Posterior vena cava (tissue), 2 donors: ENCODE measurements at regions of chr2 and their contacts with region 1.

Region 1: GRCh38 chr2:172350839-172351479 is 76.4 kb upstream of the ITGA6 start:
- DNase-seq: no peak

Region 2: DNA sequence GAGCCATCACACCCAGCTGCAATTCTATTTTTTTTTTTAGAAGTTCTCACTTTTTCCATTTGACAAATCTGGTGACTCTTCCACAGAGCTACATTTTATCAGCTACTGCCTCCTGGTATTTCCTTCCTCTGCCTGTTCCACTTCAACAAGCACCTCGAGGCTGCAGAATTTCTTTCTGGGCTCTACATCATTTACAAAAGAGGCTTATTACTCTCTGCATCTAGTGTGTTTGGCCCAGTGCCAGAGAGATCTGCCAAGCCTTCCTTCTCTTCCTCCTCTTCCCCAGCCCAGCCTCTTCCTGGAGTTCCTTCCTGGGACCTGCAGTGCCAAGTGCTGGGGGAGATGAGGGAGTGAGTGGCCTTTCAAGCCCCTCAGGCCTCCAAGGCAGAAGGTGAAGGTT is 43.2 kb before region 1 on chr2:
- intact Hi-C with region 1: no loop called
- DNase-seq: no peak

Region 3: DNA sequence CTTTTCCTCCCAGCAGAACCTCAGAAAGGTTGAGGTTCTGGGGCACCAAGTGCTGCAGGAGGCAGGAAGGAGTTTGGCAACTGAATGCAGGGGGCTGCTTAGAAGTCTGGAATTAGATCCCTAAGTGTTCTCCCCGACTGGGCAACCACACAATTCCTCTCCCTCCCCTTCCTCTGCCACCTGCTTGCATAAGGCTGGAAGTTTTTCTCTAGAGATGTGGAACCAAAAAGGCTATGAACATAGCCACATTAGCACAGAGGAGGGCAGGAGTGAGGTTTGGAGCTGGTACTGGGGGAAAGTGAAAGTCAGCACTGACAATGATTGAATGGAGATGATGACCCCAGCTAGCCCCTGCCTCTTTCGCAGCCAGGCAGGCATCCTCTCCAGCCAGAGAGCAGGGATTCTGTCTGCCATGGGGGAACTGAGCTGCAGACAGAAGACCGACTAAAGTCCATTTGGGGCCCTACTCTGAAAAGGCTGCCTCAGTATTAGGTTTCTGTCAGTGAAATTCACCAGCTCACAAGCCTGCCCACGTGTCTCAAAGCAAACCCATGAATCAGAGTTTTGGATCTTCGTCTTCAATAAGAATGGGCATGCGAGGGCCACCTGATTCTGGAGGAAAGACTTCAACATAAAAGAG is 11.5 kb before region 1 on chr2:
- intact Hi-C with region 1: no loop called
- DNase-seq: no peak

Region 4: DNA sequence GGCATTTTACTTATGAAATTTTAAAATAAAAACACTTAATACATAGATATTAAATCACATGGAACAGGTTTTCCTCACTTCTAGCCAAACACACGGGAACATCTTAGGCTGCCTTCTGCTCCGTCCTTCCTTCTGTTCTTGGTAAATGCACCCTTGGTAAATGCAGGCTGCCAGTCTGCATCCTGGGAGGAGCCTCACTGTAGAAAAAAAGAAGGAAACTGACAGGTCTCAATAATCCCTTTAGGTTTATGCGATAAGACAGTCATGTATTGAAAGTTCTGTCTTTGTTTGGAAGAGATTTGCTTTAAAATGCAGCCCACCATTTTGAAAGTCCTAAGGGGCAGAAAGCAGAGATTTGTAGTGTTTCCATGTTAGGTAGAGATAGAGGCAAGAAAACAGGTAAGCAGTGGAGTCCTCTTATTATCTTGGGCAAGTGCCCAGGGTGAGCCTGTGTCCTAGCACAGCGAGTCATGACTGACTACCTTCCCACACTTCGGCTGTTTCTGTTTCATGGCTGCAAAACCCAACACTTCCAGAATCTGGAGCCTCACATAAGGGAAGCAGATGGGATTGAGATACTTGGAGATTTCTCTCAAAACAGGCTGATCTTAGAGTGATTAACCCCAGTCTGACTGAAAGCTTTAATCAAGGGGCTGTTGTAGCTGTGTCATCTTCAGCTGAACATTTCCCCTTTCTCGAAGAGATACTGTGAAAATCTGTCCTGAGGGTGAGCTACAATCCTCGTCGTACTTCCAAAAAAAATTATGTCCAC is 593.2 kb after region 1 on chr2:
- intact Hi-C with region 1: loop called in 1 of 2 experiments (anchors 5 kb)
- DNase-seq: no peak

Region 5: DNA sequence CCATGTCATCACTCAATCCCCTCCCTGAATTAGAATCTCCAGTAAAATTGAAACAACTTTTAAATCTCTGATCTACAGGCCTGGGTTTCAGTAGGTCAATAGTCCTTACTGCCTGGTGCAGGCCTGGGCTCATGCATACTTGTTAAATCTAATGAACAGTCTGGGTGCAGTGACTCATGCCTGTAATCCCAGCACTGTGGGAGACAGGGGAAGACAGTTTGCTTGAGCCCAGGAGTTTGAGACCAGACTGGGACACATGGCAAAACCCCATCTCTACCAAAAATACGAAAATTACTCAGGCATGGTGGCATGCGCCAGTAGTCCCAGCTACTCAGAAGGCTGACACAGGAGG is 1708.9 kb after region 1 on chr2:
- intact Hi-C with region 1: loop called in 1 of 2 experiments (anchors 5 kb)
- DNase-seq: no peak